WTC11 (cell line): ENCODE measurements at regions of chr6 and their contacts with region 1.

Region 1: GRCh38 chr6:127539272-127539671 is 20.1 kb upstream of the MTCL3 start:
- DNase-seq: no peak
- ATAC-seq: no peak
- H3K4me3 Mint-ChIP-seq: no peak overlapping the region
- H3K27ac Mint-ChIP-seq: no peak overlapping the region
- H3K4me1 Mint-ChIP-seq: peaks cover 7% of the 10 kb centered on the region
- H3K27me3 Mint-ChIP-seq: no peaks in the 10 kb centered on the region
- CTCF ChIP-seq: no peak

Region 2: DNA sequence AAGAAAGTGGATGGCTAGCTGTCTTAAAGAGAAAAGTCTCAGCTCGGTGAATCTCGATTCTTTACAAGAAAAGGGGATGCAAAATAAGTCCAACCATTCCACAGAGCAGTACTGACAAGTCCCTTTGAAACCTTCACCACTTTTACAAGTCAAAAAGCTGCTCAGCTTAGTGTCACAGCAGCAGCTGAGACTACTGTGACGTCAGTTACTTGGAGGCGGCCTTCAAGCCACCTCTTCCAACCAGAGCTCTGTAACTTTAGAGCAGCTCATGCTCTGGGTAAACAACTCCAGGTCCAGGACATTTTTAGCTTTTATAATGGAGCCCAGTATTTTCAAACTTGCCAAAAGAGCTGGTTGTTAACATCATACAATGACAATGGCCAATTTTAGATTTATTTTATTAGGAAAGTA is 80.0 kb before region 1 on chr6 and contains the start of gene KIAA0408:
- CTCF ChIA-PET with region 1: interaction called, 12 read pairs
- POLR2A ChIA-PET with region 1: no interaction called
- DNase-seq: peak; percentile 51
- ATAC-seq: peak; percentile 97
- H3K4me3 Mint-ChIP-seq: peak within 1 kb of the TSS; percentile 18
- H3K27ac Mint-ChIP-seq: peak within 1 kb of the TSS; percentile 79
- H3K4me1 Mint-ChIP-seq: peaks cover 51% of the 10 kb centered on the region
- H3K27me3 Mint-ChIP-seq: no peaks in the 10 kb centered on the region
- CTCF ChIP-seq: no peak
- total RNA-seq, gene KIAA0408: 7.5 to 12.2 TPM (median 9.1 TPM) in 3 replicates

Region 3: DNA sequence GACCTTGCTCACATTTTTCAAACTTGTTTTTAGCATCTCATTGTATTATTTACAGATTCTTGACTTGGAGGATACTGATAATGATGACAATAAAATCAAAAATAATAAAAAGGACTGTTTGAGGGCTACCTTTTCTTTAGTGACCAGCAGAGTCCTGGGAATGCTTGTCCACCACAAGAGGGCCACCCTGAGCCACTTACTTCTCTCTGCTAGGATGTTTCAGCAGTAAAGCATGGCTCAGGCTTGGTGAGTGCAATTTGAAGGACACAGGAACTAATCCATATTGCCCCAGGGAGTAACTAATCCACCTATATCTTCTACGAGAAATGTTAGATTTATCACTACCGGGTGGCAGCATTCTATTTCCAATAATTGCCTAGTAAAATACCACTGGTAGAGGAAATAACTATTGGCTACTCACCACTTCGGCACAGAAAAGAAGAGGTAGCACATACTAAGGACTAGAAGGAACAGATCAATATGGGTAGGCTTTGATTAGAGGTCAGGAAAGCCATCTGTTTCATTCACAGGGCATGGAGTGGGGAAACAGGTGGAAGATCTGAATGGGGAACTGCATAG is 74.3 kb before region 1 on chr6:
- CTCF ChIA-PET with region 1: interaction called, 17 read pairs
- POLR2A ChIA-PET with region 1: no interaction called
- DNase-seq: peak; percentile 77
- ATAC-seq: peak; percentile 95
- H3K4me3 Mint-ChIP-seq: no peak overlapping the region
- H3K27ac Mint-ChIP-seq: peak overlapping the region; percentile 7
- H3K4me1 Mint-ChIP-seq: peaks cover 29% of the 10 kb centered on the region
- H3K27me3 Mint-ChIP-seq: no peaks in the 10 kb centered on the region
- CTCF ChIP-seq: peak; percentile 78

Region 4: DNA sequence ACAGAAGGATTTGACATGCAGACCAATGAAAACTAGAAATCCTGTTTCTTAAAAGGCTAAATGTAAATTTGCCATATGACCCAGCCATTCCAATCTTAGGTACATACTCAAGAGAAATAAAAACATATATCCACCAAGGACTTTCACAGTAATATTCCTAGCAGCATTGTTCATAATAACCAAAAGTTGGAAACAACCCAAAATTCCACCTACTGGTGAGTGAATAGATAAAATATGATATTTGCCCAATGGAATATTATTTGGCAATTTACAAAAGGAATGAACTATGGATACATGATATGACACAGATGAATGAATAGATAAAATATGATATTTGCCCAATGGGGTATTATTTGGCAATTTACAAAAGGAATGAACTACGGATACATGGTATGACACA is 42.8 kb before region 1 on chr6:
- CTCF ChIA-PET with region 1: no interaction called
- POLR2A ChIA-PET with region 1: no interaction called
- DNase-seq: no peak
- ATAC-seq: no peak
- H3K4me3 Mint-ChIP-seq: no peak overlapping the region
- H3K27ac Mint-ChIP-seq: no peak overlapping the region
- H3K4me1 Mint-ChIP-seq: no peaks in the 10 kb centered on the region
- H3K27me3 Mint-ChIP-seq: no peaks in the 10 kb centered on the region
- CTCF ChIP-seq: no peak

Region 5: GRCh38 chr6:127592964-127593363 is 53.7 kb after region 1 on chr6:
- CTCF ChIA-PET with region 1: no interaction called
- POLR2A ChIA-PET with region 1: no interaction called
- DNase-seq: no peak
- ATAC-seq: peak; percentile 88
- H3K4me3 Mint-ChIP-seq: peak overlapping the region; percentile 68
- H3K27ac Mint-ChIP-seq: peak overlapping the region; percentile 27; the same call in 1 of the 2 replicates
- H3K4me1 Mint-ChIP-seq: peaks cover 18% of the 10 kb centered on the region
- H3K27me3 Mint-ChIP-seq: peaks cover 4% of the 10 kb centered on the region; the same call in 1 of the 2 replicates
- CTCF ChIP-seq: no peak